Sciatic nerve (tissue), 2 donors: ENCODE measurements at regions of chr11 and their contacts with region 1.

Region 1: DNA sequence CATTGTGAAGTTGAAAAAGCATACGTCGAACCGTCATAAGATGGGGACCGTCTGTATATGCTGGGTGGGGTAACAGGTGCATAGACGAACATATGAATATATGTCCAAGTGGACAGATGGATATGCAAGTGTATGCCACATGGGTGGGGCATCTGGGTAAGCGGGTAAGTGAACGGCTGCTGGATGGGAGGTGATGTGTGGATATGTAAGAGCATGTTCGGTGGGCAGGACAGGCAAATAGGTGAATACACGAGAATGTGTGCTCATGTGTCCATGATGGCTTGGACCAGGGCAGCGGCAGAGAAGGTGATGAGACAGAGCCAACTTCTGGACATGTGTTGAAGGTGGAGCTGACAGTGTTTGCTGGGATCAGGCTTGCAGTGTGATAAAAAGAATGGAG is 12.0 kb downstream of the IFITM10 start:
- DNase-seq: peak; percentile 40
- ATAC-seq: no peak

Region 2: DNA sequence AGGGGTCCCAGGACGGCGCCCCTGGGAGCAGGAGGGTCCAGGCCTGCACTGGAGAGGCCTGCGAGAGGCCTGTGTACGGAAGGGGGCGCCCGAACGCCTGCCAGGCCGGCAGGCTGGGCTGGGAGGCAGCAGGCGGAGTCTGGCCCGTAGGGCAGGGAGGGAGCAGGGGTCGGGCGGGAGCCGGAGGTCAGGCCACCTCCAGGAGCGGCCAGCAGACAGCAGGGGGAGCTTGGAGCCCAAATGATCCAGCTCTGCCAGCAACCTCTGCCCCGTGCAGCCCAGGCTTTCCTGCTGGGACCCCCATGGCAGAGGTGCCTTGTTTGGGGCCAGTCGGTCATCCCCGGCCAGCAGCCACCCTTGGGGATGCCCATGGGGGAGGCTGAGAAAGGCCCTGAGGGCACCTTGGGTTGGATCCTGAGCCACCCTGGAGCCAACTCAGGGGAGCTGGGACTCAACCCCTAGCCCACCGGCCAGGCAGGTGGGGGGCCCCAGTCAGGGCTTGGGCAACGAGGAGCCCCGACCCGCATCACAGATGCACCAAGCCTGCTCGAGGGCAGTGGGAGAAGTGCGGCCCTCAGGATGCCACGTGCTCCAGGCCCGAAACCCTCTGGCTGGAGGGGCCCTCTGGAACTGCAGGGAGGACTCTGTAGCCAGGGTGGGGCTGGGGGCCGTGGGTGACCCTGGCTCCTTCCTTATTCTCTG is 86.8 kb after region 1 on chr11:
- intact Hi-C with region 1: loop called (anchors 1 kb)
- DNase-seq: peak; percentile 84
- ATAC-seq: peak; percentile 61